Activated CD4-positive, alpha-beta T cell treated with anti-CD3 and anti-CD28 coated beads for 36 hours (primary cell): ENCODE measurements at regions of chr2 and their contacts with region 1.

Region 1: DNA sequence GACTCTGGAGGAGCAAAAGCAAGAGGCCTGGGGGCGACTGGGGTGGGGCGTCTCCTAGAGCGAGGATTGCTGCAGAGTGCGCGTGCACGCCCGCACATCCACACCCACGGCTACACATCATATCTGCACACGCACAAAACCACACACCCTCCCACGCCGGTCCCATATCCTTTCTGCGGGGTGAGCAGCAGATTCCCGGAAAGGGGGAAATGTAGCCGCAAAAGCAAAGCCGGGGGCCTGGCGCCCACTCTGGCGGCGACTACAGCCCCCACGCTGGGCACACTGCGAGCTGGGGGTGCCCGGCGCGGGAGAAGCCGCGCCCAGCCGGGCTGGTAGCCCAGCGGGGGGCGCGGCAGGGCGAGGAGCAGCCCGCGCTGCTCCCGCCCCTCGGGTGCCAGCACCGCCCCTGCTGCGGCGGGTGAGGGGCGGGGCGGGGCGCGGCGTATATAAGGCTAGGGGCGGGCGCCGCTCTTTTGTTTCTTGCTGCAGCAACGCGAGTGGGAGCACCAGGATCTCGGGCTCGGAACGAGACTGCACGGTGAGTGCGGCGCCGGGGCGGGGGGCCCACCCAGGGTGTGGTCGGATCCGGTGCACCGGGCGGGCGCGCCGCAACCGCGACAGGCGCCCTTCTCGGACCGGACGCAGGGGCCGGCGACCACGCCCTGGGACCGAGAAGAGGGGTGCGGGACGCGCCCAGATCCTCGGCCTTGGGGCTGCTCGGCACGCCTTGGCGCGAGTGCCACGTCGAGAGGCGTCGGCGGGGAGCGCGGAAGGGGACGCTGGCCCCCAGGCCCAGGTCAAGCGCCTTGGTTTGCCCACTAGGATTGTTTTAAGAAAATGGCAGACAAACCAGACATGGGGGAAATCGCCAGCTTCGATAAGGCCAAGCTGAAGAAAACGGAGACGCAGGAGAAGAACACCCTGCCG is at the start of gene TMSB10:
- DNase-seq: peak; percentile 93
- ATAC-seq: peak; percentile 69
- H3K4me3 Mint-ChIP-seq: peak within 1 kb of the TSS; percentile 96
- H3K27ac Mint-ChIP-seq: peak within 1 kb of the TSS; percentile 89
- H3K4me1 Mint-ChIP-seq: peaks cover 57% of the 10 kb centered on the region
- H3K27me3 Mint-ChIP-seq: no peaks in the 10 kb centered on the region
- total RNA-seq, gene TMSB10: 2,345 to 2,742 TPM

Region 2: GRCh38 chr2:84459018-84459943 is 446.2 kb before region 1 on chr2 and contains the start of gene SUCLG1:
- CTCF ChIA-PET with region 1: no interaction called
- POLR2A ChIA-PET with region 1: no interaction called
- intact Hi-C with region 1: loop called in 1 of 2 experiments (anchors 1 kb)
- DNase-seq: peak; percentile 92
- ATAC-seq: peak; percentile 93
- H3K4me3 Mint-ChIP-seq: peak within 1 kb of the TSS; percentile 94
- H3K27ac Mint-ChIP-seq: peak within 1 kb of the TSS; percentile 98
- H3K4me1 Mint-ChIP-seq: peaks cover 34% of the 10 kb centered on the region
- H3K27me3 Mint-ChIP-seq: no peaks in the 10 kb centered on the region
- total RNA-seq, gene SUCLG1: 60.7 to 68.9 TPM

Region 3: GRCh38 chr2:84865181-84865783 is 40.2 kb before region 1 on chr2:
- CTCF ChIA-PET with region 1: no interaction called
- POLR2A ChIA-PET with region 1: no interaction called
- intact Hi-C with region 1: no loop called
- DNase-seq: no peak
- ATAC-seq: peak; percentile 46
- H3K4me3 Mint-ChIP-seq: no peak overlapping the region
- H3K27ac Mint-ChIP-seq: peak overlapping the region; percentile 70
- H3K4me1 Mint-ChIP-seq: peaks cover 82% of the 10 kb centered on the region
- H3K27me3 Mint-ChIP-seq: no peaks in the 10 kb centered on the region

Region 4: GRCh38 chr2:84888401-84889276 is 16.8 kb before region 1 on chr2:
- CTCF ChIA-PET with region 1: interaction called, 16 read pairs
- POLR2A ChIA-PET with region 1: interaction called, 19 read pairs
- intact Hi-C with region 1: loop called (anchors 2 kb)
- DNase-seq: peak; percentile 71
- ATAC-seq: peak; percentile 87
- H3K4me3 Mint-ChIP-seq: peak overlapping the region; percentile 67
- H3K27ac Mint-ChIP-seq: peak overlapping the region; percentile 96
- H3K4me1 Mint-ChIP-seq: peaks cover 58% of the 10 kb centered on the region
- H3K27me3 Mint-ChIP-seq: no peaks in the 10 kb centered on the region

Region 5: DNA sequence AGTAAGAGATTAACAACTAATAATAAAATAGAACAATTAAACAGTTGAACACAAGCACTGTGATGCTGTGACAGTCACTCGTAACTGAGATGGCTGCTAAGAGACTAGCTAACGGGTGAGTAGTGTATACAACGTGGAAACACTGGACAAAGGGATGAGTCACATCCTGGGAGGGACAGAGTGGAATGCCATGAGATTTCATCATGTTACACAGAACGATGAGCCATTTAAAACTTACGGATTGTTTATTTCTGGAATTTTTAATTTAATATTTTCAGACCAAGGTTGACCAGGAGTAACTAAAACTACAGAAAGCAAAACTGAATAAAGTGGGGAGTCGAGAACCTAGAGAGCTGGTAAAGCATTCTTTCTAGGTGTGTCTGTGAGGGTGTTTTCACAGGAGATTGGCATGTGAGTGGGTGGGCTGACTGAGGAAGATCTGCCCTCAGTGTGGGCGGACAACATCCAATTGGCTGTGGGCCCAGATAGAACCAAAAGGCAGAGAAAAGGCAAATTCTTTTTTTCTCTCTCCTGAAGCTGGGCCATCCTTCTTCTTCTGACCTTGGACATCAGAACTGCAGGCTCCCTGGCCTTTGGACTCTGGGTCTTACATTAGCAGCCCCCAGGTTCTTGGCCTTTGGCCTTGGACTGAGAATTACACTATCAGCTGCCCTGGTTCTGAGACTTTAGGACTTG is 14.6 kb after region 1 on chr2:
- CTCF ChIA-PET with region 1: interaction called, 42 read pairs
- POLR2A ChIA-PET with region 1: interaction called, 35 read pairs
- intact Hi-C with region 1: loop called (anchors 1 kb)
- DNase-seq: peak; percentile 81
- ATAC-seq: peak; percentile 81
- H3K4me3 Mint-ChIP-seq: peak overlapping the region; percentile 36
- H3K27ac Mint-ChIP-seq: peak overlapping the region; percentile 83
- H3K4me1 Mint-ChIP-seq: peaks cover 41% of the 10 kb centered on the region
- H3K27me3 Mint-ChIP-seq: no peaks in the 10 kb centered on the region

Region 6: DNA sequence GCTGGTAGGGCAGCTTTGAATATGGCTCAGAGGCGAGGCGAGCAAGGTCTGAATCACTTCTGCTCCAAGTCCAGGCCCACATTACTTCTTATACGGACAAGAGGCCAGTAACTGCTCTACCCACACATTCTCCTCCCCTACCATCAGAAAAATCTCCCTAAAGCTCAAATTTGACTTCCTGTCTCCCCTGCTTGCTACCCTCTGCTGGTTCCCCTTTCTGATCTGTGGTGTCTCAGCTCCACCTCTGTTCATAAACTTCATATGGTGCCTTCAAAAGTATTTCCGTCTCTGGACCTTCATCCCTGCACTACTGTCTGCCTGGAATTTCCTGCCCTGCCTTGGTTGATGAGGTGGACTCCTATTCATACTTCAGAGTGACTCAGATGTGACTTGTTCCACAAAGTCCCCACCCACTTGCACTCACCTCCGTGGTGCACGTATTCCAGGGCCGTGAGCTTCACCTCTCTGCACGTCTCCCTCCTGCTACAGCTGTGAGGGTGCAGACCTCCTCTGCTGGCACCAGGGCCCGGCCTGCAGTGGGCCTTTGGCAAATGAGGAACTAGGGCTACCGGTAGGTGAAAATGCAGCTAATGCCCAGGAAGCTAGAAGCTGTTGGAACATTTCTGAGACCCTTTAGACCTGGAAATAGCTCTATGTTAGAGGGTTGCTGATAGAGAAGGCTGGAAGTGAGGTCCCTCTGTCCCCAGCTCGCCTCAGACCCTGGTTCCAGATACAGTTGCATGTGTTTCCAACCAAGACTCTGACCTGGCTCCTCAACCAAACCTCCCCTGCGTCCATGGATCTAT is 41.0 kb after region 1 on chr2:
- CTCF ChIA-PET with region 1: no interaction called
- POLR2A ChIA-PET with region 1: interaction called, 5 read pairs
- intact Hi-C with region 1: loop called in 1 of 2 experiments (anchors 2 kb)
- DNase-seq: peak; percentile 92
- ATAC-seq: peak; percentile 85
- H3K4me3 Mint-ChIP-seq: peak overlapping the region; percentile 67
- H3K27ac Mint-ChIP-seq: peak overlapping the region; percentile 99
- H3K4me1 Mint-ChIP-seq: peaks cover 49% of the 10 kb centered on the region
- H3K27me3 Mint-ChIP-seq: no peaks in the 10 kb centered on the region